ENCODE measurements at regions of chr10 and their contacts with region 1.

Region 1: DNA sequence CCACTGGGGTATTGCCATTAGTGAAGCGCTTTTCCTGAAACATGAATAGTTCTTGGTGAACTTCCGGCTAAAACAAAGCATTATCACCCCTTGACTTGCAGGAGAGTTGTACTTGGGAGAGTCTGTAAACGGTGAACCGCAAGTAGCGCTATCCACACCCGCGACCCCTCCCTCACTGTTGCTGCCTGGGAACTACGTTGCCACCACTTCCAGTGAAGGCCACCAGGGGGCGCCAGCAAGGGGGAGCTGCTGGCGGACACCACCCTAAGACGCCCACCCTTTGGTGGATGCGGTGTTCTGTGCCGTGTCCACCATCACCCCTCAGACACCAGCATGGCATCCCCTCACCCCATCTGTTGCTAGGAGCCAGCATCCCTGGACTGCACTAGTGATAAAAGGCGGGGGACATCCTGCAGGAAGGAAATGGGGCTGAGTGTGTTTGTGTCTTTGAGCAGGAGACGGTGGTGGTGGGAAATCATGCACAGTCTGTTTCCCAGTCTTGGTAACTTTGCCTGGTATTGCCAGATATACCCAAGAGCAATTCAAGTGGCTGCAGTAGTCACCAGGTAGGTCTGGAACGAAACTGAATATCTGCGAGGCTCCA is 298.2 kb downstream of the FRMD4A start:
- DNase-seq: no peak
- H3K4me3 ChIP-seq: no peak overlapping the region
- H3K27ac ChIP-seq: no peak overlapping the region
- H3K4me1 ChIP-seq: no peaks in the 10 kb centered on the region
- H3K27me3 ChIP-seq: no peaks in the 10 kb centered on the region
- CTCF ChIP-seq: peak in 1 of 3 donors; percentile 7
- POLR2A ChIP-seq: no peak

Region 2: GRCh38 chr10:13291821-13292773 is 740.4 kb before region 1 on chr10:
- intact Hi-C with region 1: loop called (anchors 5 kb)
- DNase-seq: no peak
- H3K4me3 ChIP-seq: no peak overlapping the region
- H3K27ac ChIP-seq: no peak overlapping the region
- H3K4me1 ChIP-seq: no peaks in the 10 kb centered on the region
- H3K27me3 ChIP-seq: no peaks in the 10 kb centered on the region
- CTCF ChIP-seq: no peak
- POLR2A ChIP-seq: no peak

Measured in breast epithelium (tissue), 4 donors.